Head of caudate nucleus (tissue), 42 donors: ENCODE measurements at regions of chr3 and their contacts with region 1.

Region 1: GRCh38 chr3:11385891-11386290 is 113.7 kb downstream of the ATG7 start:
- DNase-seq: no peak

Region 2: GRCh38 chr3:11400213-11400612 is 14.3 kb after region 1 on chr3:
- intact Hi-C with region 1: no loop called
- DNase-seq: no peak

Region 3: GRCh38 chr3:11445883-11446282 is 60.0 kb after region 1 on chr3:
- intact Hi-C with region 1: loop called (anchors 10 kb)
- DNase-seq: no peak

Region 4: GRCh38 chr3:11556851-11557644 is 171.2 kb after region 1 on chr3:
- intact Hi-C with region 1: loop called (anchors 10 kb)
- DNase-seq: peak in 1 of 42 donors; percentile 23

Region 5: GRCh38 chr3:11803977-11804892 is 418.3 kb after region 1 on chr3:
- intact Hi-C with region 1: loop called (anchors 10 kb)
- DNase-seq: peak in 33 of 42 donors; percentile 16 to 72 (median 42)